ENCODE measurements at regions of chr5 and their contacts with region 1.

Region 1: GRCh38 chr5:177113566-177114424 is 19.8 kb upstream of the NSD1 start:
- DNase-seq: peak; percentile 74 to 84 (median 77)
- H3K4me3 ChIP-seq: no peak overlapping the region
- H3K27ac ChIP-seq: no peak overlapping the region
- H3K4me1 ChIP-seq: peaks cover 0 to 26% (median 3%) of the 10 kb centered on the region in 4 experiments
- H3K27me3 ChIP-seq: no peaks in the 10 kb centered on the region

Region 2: DNA sequence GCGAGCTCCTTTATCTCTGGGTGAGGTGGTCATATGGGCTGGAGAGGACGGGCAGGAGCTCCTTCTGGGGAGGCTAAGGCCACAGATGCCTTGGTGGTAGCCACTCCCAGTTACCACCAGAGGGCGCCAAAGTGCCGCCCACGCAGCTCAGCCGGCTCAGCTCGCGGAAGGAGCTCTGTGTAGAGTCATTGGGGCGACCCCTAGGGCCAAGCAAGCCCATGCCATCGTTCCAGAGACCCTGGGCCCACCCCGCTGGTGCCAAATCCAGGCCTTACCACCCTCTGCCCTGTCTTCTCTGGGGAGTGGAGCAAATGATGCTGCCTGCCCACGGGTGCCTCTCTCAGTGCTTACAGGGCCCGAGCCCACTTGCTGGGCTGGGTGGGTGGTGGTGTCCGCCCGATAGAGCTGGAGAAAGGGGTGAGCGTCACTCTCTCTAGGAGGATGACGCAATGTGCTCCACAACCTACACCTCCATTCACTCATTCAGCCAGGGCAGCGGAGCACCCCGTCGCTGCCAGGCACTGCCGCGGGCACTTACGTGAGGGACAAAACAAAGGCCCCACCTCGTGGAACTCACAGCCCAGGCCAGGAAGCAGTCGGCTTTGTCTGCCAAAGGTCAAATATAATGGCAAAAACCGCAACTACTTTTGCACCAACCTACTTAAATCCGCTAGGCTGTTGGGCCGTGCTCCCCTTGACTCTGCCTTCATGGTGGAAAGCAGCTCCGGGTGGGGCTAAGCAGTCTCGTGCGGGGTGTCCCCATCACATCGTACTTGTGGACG is 452.7 kb before region 1 on chr5:
- CTCF ChIA-PET with region 1: interaction called, 18 read pairs
- POLR2A ChIA-PET with region 1: no interaction called
- DNase-seq: peak; percentile 85 to 90 (median 86)
- H3K4me3 ChIP-seq: no peak overlapping the region
- H3K27ac ChIP-seq: no peak overlapping the region
- H3K4me1 ChIP-seq: peaks cover 4 to 20% (median 14%) of the 10 kb centered on the region in 4 experiments
- H3K27me3 ChIP-seq: peaks cover 0 to 23% (median 15%) of the 10 kb centered on the region in 5 experiments

Region 3: GRCh38 chr5:177040814-177041420 is 72.9 kb before region 1 on chr5:
- CTCF ChIA-PET with region 1: no interaction called
- POLR2A ChIA-PET with region 1: no interaction called
- DNase-seq: no peak
- H3K4me3 ChIP-seq: no peak overlapping the region
- H3K27ac ChIP-seq: no peak overlapping the region
- H3K4me1 ChIP-seq: no peaks in the 10 kb centered on the region
- H3K27me3 ChIP-seq: no peaks in the 10 kb centered on the region

Region 4: DNA sequence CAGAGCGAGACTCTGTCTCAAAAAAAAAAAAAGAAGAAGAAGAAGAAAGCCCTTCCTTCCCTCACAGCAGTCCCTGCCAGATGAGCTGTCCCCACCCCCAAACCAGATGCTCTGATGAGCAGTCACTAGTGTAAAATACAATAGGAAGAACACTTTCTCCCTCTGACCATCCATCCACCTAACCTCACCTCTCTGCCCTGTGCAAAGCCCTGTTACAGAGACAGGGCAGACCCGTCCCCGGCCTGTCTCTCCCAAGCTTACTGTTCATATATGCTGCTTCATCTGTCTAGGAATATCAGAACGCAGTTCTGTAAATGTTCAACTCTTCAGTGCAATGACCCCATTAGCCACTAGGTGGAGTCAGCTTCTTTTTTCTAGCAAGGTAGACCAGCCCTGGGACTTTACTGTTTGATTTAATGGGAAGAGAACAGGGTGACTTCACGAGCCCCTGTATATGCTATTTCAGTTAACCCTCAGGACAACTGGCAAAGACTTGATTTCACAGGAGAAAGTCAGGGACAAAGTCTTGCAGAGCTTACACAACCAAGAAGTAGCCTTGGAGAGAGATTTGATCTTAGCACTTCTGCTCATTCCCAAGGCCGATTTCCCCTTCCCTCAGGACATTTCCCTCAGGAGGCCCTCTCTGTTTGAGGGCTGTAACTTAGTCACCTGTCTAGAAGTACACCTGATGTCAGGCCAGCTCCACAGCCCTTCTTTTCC is 42.0 kb before region 1 on chr5:
- CTCF ChIA-PET with region 1: interaction called, 71 read pairs
- POLR2A ChIA-PET with region 1: no interaction called
- DNase-seq: peak; percentile 83 to 91 (median 84)
- H3K4me3 ChIP-seq: peak overlapping the region in 1 of 7 experiments; percentile 43
- H3K27ac ChIP-seq: no peak overlapping the region
- H3K4me1 ChIP-seq: peaks cover 3 to 7% (median 4%) of the 10 kb centered on the region in 4 experiments
- H3K27me3 ChIP-seq: no peaks in the 10 kb centered on the region

Region 5: GRCh38 chr5:177086924-177087706 is 26.7 kb before region 1 on chr5:
- CTCF ChIA-PET with region 1: interaction called, 15 read pairs
- POLR2A ChIA-PET with region 1: no interaction called
- DNase-seq: peak; percentile 61 to 79 (median 74)
- H3K4me3 ChIP-seq: peak overlapping the region in 6 of 7 experiments; percentile 19 to 72 (median 48)
- H3K27ac ChIP-seq: no peak overlapping the region
- H3K4me1 ChIP-seq: peaks cover 0 to 15% (median 12%) of the 10 kb centered on the region in 4 experiments
- H3K27me3 ChIP-seq: peaks cover 0 to 28% (median 9%) of the 10 kb centered on the region in 5 experiments

Region 6: DNA sequence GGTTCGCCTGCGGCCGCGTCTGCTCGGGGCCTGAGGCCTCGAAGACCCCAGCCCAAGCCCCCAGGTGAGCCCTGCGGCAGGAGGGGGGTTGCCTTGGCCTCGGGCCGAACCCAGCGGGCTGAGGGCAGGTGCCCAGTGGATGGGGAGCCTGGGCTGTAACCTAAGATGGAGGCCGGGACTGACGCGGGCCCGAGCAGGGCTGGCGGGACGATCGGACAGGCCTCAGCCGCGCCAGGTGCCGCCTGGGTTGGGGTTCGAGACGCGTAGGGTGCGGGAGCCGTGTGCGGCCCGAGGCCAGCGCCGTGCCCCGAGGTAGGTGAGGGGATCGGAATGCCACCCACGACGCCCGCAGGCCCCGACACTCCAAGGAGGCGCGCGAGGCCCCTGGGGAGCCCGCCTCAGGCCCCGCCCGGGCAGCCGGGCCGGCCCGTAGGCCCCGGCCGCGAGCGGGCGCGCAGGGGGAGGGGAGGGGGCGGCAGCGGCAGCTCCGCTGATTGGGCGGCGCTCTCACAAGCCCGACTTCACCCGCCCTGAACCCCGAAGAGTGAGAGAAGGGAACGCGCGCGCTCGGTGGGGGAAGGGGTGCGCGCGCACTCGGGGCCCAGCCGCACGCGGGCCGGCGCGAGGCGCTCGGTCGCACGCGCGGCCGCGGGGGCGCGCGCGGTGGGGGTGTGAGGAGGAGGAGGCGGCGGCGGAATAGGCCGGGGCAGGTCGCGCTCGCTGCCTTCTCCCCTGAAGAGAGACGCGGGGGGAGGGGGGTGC is 19.5 kb after region 1 on chr5 and contains the start of gene NSD1:
- CTCF ChIA-PET with region 1: interaction called, 53 read pairs
- POLR2A ChIA-PET with region 1: no interaction called
- DNase-seq: peak; percentile 89 to 96 (median 95)
- H3K4me3 ChIP-seq: peak within 1 kb of the TSS; percentile 60 to 84 (median 71)
- H3K27ac ChIP-seq: peak within 1 kb of the TSS; percentile 40 to 79
- H3K4me1 ChIP-seq: peaks cover 14 to 42% (median 28%) of the 10 kb centered on the region in 4 experiments
- H3K27me3 ChIP-seq: no peaks in the 10 kb centered on the region

Region 7: DNA sequence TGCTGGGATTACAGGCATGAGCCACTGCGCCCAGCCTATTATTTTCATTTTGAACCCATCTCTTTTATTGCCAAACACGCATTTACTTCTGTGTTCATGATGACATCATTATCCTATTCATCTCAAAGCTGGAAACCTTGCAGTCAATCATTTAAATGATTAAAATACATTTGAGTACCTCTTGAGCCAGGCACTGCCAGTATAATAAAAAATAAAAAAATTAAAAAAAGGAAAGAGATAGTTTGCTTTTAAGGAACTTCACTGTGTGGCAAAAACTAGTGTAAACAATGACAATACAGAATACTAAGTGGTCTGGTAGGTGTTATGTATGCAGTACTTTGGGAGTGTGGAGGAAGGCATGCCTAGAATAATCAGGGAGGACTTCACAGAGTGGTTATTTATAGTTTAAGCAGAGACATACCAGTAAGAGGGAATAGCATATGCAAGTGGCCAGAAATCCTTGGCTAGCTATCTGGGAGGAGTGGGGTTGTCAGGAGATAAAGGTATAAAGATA is 28.4 kb after region 1 on chr5:
- CTCF ChIA-PET with region 1: interaction called, 53 read pairs
- POLR2A ChIA-PET with region 1: no interaction called
- DNase-seq: peak in 2 of 3 donors; percentile 46 to 56
- H3K4me3 ChIP-seq: no peak overlapping the region
- H3K27ac ChIP-seq: peak overlapping the region in 1 of 2 experiments; percentile 36
- H3K4me1 ChIP-seq: peaks cover 0 to 13% (median 3%) of the 10 kb centered on the region in 4 experiments
- H3K27me3 ChIP-seq: no peaks in the 10 kb centered on the region

Region 8: DNA sequence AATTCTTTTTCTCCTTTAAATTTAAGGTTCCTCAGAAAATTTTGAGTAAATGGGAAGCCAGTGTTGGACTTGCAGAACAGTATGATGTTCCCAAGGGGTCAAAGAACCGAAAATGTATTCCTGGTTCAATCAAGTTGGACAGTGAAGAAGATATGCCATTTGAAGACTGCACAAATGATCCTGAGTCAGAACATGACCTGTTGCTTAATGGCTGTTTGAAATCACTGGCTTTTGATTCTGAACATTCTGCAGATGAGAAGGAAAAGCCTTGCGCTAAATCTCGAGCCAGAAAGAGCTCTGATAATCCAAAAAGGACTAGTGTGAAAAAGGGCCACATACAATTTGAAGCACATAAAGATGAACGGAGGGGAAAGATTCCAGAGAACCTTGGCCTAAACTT is 95.8 kb after region 1 on chr5:
- CTCF ChIA-PET with region 1: interaction called, 10 read pairs
- POLR2A ChIA-PET with region 1: no interaction called
- DNase-seq: no peak
- H3K4me3 ChIP-seq: no peak overlapping the region
- H3K27ac ChIP-seq: no peak overlapping the region
- H3K4me1 ChIP-seq: no peaks in the 10 kb centered on the region
- H3K27me3 ChIP-seq: no peaks in the 10 kb centered on the region

Measured in common myeloid progenitor, CD34-positive (primary cell).